ENCODE measurements at regions of chr14 and their contacts with region 1.

Region 1: DNA sequence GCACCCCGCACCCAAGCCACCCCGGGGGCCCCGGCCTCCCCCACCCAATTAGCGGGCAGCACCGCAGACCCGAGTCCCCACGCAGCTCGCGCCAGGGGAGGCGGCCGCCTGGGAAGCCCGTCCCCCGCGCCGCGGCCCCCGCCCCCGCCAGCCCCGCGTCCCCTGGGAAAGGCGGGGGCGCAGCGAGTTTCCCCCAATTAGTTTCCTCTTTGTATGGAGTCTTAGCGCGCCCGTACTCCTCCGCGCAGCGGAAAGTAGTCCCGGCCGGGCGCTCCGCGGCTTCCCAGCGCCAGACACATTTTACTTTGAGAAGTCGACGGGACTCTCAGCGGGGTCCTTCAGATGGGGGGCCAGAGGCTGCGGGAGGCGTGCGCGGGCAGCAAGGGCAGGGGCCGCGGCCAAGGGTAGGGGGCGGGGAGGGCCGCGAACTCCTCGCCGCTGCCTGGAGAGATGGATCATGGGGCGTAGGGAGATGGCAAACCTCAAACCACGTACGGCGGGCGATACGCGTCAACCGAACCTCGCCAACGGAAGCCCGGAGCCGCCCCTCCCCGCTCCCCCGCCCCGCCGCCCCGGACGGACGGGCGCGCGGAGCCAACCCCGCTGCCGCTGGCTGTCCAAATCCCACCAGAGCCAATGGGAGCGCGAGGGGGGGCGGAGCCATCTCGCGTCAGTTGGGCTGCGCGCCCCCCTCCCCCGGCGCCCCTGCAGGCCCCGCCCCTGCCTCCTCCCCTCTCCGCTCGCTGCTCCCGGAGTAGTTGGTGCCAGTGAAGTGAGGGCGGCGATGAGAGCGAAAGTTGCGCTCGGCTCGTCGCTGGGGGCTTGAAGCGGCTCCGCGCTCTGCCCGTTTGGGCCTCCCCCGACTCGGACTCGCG is at the start of gene RCOR1:
- DNase-seq: peak; percentile 91
- H3K4me3 ChIP-seq: peak within 1 kb of the TSS; percentile 79
- CTCF ChIP-seq: no peak

Region 2: DNA sequence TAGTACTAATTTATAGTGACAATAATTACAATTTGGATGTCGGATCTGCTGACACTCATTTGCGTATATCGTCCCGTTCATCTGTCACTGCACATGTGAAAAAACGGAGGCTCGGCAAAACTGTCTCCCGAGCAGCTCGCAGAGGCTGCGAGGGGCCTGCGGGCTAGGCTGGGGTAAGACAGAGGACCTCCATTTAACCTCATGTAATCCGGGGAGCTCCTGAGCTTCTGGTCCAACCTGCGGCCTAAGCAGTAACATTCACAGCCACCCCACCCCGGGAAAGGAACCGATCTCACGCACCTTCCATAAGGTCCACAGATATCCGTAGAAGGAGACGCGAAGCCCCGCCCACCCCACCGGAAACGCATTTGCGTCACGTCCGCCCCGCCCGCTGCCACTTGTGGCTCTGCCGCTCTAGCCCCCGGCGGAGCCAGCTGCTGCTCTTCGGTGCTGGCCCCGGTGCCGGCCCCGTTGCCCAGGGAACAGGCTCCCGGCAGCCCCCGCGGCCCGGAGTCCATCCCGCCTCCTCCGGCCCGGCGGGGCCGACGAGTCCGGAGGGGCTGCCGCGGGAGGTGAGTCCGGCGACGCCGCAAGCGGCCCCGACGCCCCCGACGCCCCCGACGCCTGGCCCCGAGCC is 229.5 kb before region 1 on chr14 and contains the starts of genes CINP and TECPR2:
- CTCF ChIA-PET with region 1: no interaction called
- POLR2A ChIA-PET with region 1: no interaction called
- DNase-seq: peak; percentile 65
- H3K4me3 ChIP-seq: peak within 1 kb of the TSS; percentile 89
- CTCF ChIP-seq: no peak

Region 3: DNA sequence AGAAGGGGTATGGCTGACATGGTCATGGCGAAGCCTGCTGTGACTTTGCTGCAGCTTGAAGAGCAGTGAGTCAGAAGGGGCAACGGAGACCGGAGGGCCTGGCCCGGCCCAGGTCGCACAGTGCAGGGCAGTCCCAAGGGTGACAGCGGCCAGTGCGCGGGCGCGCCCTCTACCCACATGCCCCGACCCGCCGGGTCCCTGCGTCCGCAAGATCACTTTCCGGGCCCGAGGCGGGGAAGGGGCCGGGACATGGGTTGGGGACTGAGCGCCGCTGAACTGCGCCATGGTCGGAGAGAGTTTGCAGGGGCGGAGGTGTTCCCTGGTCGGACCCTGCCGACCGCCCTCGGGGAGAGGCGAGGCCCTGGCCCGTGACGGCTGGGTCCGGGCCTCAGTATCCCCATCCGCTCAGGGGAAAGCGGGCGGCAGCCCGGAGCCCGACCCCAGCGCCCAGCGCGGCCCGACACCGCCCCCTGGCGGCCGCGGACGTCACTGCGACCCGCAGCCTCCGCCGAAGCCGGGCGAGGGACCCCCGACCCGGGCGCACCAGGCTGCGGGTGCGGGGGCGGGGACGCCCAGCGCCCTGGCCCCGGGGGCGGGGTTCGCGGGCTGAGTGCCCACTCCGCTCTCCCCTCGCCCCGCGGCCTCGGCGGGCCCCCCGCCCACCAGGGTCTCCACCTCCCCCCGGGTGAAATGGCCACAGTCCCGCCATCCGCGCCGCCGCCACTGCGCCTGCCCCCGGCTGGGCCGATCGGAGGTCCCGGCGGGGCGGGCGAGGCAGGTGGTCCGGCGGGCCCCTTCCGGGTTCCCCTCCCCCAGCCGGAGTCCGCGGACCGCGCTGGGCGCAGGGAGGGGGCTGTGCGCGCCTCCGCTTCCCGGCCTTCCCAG is 75.4 kb before region 1 on chr14:
- CTCF ChIA-PET with region 1: interaction called, 11 read pairs
- POLR2A ChIA-PET with region 1: no interaction called
- DNase-seq: no peak
- H3K4me3 ChIP-seq: peak overlapping the region; percentile 63
- CTCF ChIP-seq: peak; percentile 60

Region 4: DNA sequence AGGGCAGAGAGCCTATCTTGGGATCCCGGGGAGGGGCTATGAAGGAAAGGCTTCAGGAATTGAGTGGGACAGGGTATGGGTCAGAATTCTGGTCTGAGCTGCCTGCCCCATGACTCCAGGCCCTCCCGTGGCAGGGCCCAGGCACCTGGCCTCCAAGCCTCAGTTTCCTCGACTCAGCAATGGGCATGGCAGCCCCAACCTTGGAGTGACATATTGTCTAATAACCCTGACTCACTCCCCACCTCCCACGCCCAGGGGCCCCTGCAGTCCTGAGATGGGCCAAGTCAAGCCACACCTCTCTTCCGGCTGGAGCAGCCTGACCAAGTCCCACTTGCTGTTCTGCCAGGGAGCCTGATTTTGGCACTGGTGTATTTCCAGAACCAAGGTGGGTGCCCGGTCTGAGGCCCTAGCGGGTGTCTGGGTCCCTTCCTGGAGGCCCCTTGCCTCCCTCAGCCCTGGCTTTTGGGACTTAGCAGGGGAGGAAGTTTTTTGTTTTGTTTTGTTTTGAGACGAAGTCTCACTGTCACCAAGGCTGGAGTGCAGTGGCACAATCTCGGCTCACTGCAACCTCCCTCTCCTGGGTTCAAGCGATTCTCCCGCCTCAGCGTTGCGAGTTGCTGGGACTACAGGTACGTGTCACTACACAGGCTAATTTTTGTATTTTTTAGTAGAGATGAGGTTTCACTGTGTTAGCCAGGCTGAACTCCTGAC is 40.0 kb before region 1 on chr14:
- CTCF ChIA-PET with region 1: no interaction called
- POLR2A ChIA-PET with region 1: no interaction called
- DNase-seq: no peak
- H3K4me3 ChIP-seq: no peak overlapping the region
- CTCF ChIP-seq: no peak

Region 5: GRCh38 chr14:102579696-102580334 is 12.3 kb before region 1 on chr14:
- CTCF ChIA-PET with region 1: interaction called, 16 read pairs
- POLR2A ChIA-PET with region 1: interaction called, 3 read pairs
- DNase-seq: peak; percentile 51
- H3K4me3 ChIP-seq: no peak overlapping the region; the same call in 1 of the 2 replicates
- CTCF ChIP-seq: no peak

Region 6: DNA sequence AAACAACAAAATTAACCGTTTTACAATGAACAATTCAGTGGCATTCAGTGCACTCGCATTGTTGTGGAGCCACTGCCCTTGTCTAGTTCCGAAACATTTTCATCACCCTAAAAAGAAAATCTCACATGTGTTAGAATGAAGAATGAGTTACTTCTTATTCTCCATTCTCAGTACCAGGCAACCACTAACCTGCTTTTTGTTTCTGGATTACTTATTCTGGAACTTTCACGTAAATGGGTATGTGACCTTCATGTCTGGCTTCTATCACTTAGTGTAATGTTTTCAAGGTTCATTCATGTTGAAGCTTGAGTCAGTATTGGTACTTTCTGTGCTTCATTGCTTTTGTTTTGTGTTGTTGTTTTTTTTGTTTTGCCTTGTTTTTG is 15.9 kb after region 1 on chr14:
- CTCF ChIA-PET with region 1: interaction called, 87 read pairs
- POLR2A ChIA-PET with region 1: no interaction called
- DNase-seq: no peak
- H3K4me3 ChIP-seq: no peak overlapping the region
- CTCF ChIP-seq: no peak

Region 7: DNA sequence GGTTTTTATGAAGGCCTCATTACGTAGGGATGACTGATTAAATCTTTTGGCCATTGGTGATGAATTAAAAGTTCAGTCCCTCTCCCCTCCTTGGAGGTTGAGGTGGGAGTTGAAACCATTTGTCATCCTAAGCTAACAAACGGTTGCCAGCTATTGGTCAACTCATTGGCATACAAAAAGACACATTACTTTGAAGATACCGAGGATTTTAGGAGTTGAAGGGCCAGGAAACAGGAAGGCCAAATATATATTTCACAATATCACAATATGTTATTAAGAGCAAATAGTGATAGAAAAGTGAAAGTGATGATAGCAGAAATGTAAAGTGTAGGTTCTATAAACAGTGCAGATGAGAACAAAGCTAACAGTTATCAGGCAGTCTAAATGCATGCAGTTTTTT is 24.7 kb after region 1 on chr14:
- CTCF ChIA-PET with region 1: interaction called, 87 read pairs
- POLR2A ChIA-PET with region 1: no interaction called
- DNase-seq: no peak
- H3K4me3 ChIP-seq: no peak overlapping the region
- CTCF ChIP-seq: no peak

Region 8: DNA sequence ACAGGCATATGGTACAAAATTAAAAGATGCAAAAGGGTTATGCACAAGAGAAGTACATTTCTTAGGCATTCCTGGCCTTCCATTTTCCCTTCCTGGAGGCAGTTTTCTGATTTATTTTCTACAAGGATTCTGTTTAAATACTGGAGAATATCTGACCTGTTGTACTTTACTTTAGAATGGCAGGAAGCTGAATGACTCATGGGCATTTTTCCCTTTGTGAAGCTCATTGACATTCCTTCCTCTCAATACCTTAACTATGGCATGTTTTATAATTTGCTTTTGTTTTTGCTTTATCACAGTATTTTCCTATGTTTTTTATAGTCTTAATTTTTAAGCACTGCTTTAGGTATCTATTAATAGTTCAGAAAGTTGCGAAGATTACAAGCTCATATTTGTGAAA is 63.0 kb after region 1 on chr14:
- CTCF ChIA-PET with region 1: interaction called, 17 read pairs
- POLR2A ChIA-PET with region 1: no interaction called
- DNase-seq: no peak
- H3K4me3 ChIP-seq: no peak overlapping the region
- CTCF ChIP-seq: no peak